ENCODE measurements at regions of chrX and their contacts with region 1.

Region 1: GRCh38 chrX:53224860-53225797 is at the start of gene KDM5C:
- DNase-seq: peak; percentile 96
- H3K4me3 Mint-ChIP-seq: peak within 1 kb of the TSS; percentile 98
- H3K27ac Mint-ChIP-seq: peak within 1 kb of the TSS; percentile 100
- H3K4me1 Mint-ChIP-seq: peaks cover 22% of the 10 kb centered on the region
- H3K27me3 Mint-ChIP-seq: peaks cover 6% of the 10 kb centered on the region
- CTCF ChIP-seq: no peak
- total RNA-seq, gene KDM5C: 163 and 167 TPM in 2 replicates

Region 2: DNA sequence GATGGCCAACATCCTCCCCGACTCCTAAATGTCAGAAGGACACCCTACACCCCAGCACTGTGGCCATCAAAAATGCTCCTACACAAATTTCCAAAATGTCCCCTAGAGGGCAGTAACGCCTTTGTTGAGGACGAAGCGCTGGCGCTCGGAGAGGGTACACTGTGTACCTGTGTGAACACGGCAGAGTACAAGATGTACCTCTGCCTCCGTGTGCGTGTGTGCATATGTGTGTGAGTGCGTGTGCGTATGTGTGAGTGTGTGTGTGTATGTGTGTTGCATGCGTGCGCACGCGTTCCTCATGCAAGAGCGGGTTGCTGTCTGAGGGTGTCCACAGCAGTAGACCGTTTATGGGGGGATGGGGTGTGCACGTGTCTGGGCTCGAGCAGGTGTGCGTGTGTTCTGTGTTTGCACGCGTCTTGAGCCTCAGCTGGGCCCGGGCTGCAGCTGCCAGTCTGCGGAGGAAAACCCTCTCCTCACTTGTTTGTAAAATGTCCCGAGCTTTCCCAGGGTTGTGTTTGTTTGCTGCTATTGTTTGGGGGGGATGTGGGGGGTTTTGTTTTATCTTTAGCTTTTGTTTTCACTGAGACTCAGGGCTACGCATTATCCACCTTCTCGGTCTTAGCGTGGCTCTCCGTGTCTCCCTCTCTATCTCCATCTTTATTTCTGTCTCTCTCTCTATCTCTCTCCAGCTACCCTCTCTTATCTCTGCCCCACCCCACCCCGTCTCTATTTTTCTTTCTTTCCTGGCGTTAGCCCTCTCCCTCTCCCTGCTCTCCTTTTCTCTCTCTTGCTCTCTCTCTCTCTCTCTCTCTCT is 153.3 kb before region 1 on chrX:
- CTCF ChIA-PET with region 1: no interaction called
- POLR2A ChIA-PET with region 1: interaction called, 11 read pairs
- intact Hi-C with region 1: loop called (anchors 5 kb)
- DNase-seq: peak; percentile 86
- H3K4me3 Mint-ChIP-seq: peak overlapping the region; percentile 38
- H3K27ac Mint-ChIP-seq: peak overlapping the region; percentile 2
- H3K4me1 Mint-ChIP-seq: peaks cover 13% of the 10 kb centered on the region
- H3K27me3 Mint-ChIP-seq: peaks cover 71% of the 10 kb centered on the region
- CTCF ChIP-seq: peak; percentile 77

Region 3: GRCh38 chrX:53093748-53094583 is 131.2 kb before region 1 on chrX and contains the start of gene KANTR:
- CTCF ChIA-PET with region 1: no interaction called
- POLR2A ChIA-PET with region 1: interaction called, 4 read pairs
- intact Hi-C with region 1: loop called (anchors 1 kb)
- DNase-seq: peak; percentile 94
- H3K4me3 Mint-ChIP-seq: peak within 1 kb of the TSS; percentile 83
- H3K27ac Mint-ChIP-seq: peak within 1 kb of the TSS; percentile 4
- H3K4me1 Mint-ChIP-seq: peaks cover 7% of the 10 kb centered on the region
- H3K27me3 Mint-ChIP-seq: peaks cover 41% of the 10 kb centered on the region
- CTCF ChIP-seq: no peak
- total RNA-seq, gene KANTR: 3.4 and 6.3 TPM in 2 replicates

Region 4: GRCh38 chrX:53211391-53211978 is 13.6 kb before region 1 on chrX:
- CTCF ChIA-PET with region 1: no interaction called
- POLR2A ChIA-PET with region 1: interaction called, 16 read pairs
- intact Hi-C with region 1: no loop called
- DNase-seq: peak; percentile 83
- H3K4me3 Mint-ChIP-seq: no peak overlapping the region
- H3K27ac Mint-ChIP-seq: peak overlapping the region; percentile 47
- H3K4me1 Mint-ChIP-seq: peaks cover 8% of the 10 kb centered on the region
- H3K27me3 Mint-ChIP-seq: no peaks in the 10 kb centered on the region
- CTCF ChIP-seq: no peak

Region 5: GRCh38 chrX:53262918-53263394 is 37.8 kb after region 1 on chrX:
- CTCF ChIA-PET with region 1: no interaction called
- POLR2A ChIA-PET with region 1: interaction called, 13 read pairs
- intact Hi-C with region 1: loop called (anchors 2 kb)
- DNase-seq: peak; percentile 81
- H3K4me3 Mint-ChIP-seq: no peak overlapping the region
- H3K27ac Mint-ChIP-seq: no peak overlapping the region
- H3K4me1 Mint-ChIP-seq: peaks cover 30% of the 10 kb centered on the region
- H3K27me3 Mint-ChIP-seq: peaks cover 39% of the 10 kb centered on the region
- CTCF ChIP-seq: no peak

Measured in MCF 10A (cell line).